Activated CD4-positive, alpha-beta T cell treated with anti-CD3 and anti-CD28 coated beads for 36 hours (primary cell): ENCODE measurements at regions of chr9 and their contacts with region 1.

Region 1: GRCh38 chr9:15295761-15296405 is 11.1 kb downstream of the TTC39B start:
- DNase-seq: peak; percentile 41
- ATAC-seq: peak; percentile 24
- H3K4me3 Mint-ChIP-seq: peak overlapping the region; percentile 64
- H3K27ac Mint-ChIP-seq: peak overlapping the region; percentile 94
- H3K4me1 Mint-ChIP-seq: peaks cover 83% of the 10 kb centered on the region
- H3K27me3 Mint-ChIP-seq: no peaks in the 10 kb centered on the region

Region 2: GRCh38 chr9:14322211-14323082 is 973.4 kb before region 1 on chr9:
- CTCF ChIA-PET with region 1: no interaction called
- POLR2A ChIA-PET with region 1: no interaction called
- intact Hi-C with region 1: loop called (anchors 10 kb)
- DNase-seq: peak; percentile 90
- ATAC-seq: peak; percentile 86
- H3K4me3 Mint-ChIP-seq: peak overlapping the region; percentile 69
- H3K27ac Mint-ChIP-seq: peak overlapping the region; percentile 70
- H3K4me1 Mint-ChIP-seq: peaks cover 23% of the 10 kb centered on the region
- H3K27me3 Mint-ChIP-seq: peaks cover 47% of the 10 kb centered on the region

Region 3: GRCh38 chr9:15231788-15232635 is 63.9 kb before region 1 on chr9:
- CTCF ChIA-PET with region 1: interaction called, 5 read pairs
- POLR2A ChIA-PET with region 1: no interaction called
- intact Hi-C with region 1: loop called (anchors 1 to 5 kb)
- DNase-seq: peak; percentile 51
- ATAC-seq: peak; percentile 34
- H3K4me3 Mint-ChIP-seq: no peak overlapping the region
- H3K27ac Mint-ChIP-seq: no peak overlapping the region
- H3K4me1 Mint-ChIP-seq: peaks cover 52% of the 10 kb centered on the region
- H3K27me3 Mint-ChIP-seq: no peaks in the 10 kb centered on the region

Region 4: GRCh38 chr9:15306757-15307534 is 11.1 kb after region 1 on chr9 and contains the start of gene TTC39B:
- CTCF ChIA-PET with region 1: interaction called, 13 read pairs
- POLR2A ChIA-PET with region 1: interaction called, 7 read pairs
- intact Hi-C with region 1: loop called (anchors 1 kb)
- DNase-seq: peak; percentile 90
- ATAC-seq: peak; percentile 83
- H3K4me3 Mint-ChIP-seq: peak within 1 kb of the TSS; percentile 98
- H3K27ac Mint-ChIP-seq: peak within 1 kb of the TSS; percentile 98
- H3K4me1 Mint-ChIP-seq: peaks cover 59% of the 10 kb centered on the region
- H3K27me3 Mint-ChIP-seq: no peaks in the 10 kb centered on the region
- total RNA-seq, gene TTC39B: 26.4 to 34.4 TPM

Region 5: GRCh38 chr9:15510789-15511575 is 215.1 kb after region 1 on chr9 and contains the start of gene PSIP1:
- CTCF ChIA-PET with region 1: no interaction called
- POLR2A ChIA-PET with region 1: no interaction called
- intact Hi-C with region 1: loop called (anchors 2 to 5 kb)
- DNase-seq: peak; percentile 92
- ATAC-seq: peak; percentile 86
- H3K4me3 Mint-ChIP-seq: peak within 1 kb of the TSS; percentile 85
- H3K27ac Mint-ChIP-seq: peak within 1 kb of the TSS; percentile 98
- H3K4me1 Mint-ChIP-seq: peaks cover 48% of the 10 kb centered on the region
- H3K27me3 Mint-ChIP-seq: no peaks in the 10 kb centered on the region
- total RNA-seq, gene PSIP1: 139 to 189 TPM

Region 6: GRCh38 chr9:15552636-15553527 is 257.0 kb after region 1 on chr9 and contains the start of gene CCDC171:
- CTCF ChIA-PET with region 1: no interaction called
- POLR2A ChIA-PET with region 1: no interaction called
- intact Hi-C with region 1: loop called (anchors 2 to 5 kb)
- DNase-seq: peak; percentile 93
- ATAC-seq: peak; percentile 91
- H3K4me3 Mint-ChIP-seq: peak within 1 kb of the TSS; percentile 79
- H3K27ac Mint-ChIP-seq: peak within 1 kb of the TSS; percentile 80
- H3K4me1 Mint-ChIP-seq: peaks cover 9% of the 10 kb centered on the region
- H3K27me3 Mint-ChIP-seq: no peaks in the 10 kb centered on the region
- total RNA-seq, gene CCDC171: 2.8 to 2.9 TPM